Cardiac septum (tissue), 1 donor: ENCODE measurements at regions of chr9 and their contacts with region 1.

Region 1: DNA sequence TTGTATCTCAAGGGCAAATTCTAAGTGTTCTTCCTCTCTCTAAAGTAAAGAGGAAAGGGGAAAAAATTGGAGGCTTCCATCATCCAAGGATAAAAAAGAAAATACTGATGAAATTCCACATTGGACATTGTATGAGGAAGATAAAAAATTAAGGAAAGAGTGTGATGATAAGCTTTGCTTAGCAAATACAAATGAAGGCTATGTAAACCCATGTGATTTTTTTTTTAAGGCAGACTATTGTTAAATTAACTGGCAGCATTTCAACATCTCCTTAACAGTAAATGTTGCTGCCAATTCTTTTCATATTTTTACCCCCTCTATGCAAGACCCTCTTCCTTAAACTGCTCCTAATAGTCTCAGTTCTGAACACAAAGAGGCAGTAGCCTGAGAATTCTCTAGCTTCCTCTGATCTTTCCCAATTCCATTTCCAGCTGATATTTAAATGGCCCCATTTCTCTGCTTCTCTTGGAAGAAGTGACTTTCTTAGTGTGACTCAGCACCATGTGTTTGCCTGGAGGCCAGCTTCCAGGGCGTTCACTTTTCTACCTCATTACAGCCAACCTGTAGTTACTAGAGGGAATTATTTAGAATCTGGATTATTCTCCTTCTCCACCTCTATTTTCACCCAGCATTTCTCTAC is 159.7 kb downstream of the TLE1 start:
- DNase-seq: no peak

Region 2: DNA sequence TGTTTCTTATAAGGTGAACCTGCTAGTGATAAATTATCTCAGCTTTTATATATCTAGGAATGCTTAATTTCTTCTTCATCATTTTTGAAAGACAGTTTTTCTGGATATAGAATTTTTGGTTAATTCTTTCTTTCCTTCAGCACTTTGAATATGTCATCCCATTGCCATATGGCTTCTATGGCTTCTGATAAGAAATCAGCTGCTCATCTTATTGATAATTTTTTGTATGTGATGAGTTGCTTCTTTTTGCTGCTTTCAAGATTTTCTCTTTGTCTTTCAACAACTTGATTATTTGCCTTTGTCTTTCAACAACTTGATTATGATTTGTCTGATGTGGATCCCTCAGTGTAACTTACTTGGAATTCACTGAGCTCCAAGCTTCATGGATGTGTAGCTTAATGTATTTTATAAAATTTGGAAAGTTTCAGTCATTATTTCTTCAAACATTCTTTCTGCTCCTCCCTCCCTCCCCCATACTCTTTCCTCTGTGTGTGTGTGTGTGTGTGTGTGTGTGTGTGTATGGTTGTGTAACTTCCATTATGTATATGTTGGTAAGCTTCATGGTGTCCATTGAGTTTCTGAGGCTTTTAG is 84.2 kb before region 1 on chr9:
- intact Hi-C with region 1: no loop called
- DNase-seq: no peak

Region 3: DNA sequence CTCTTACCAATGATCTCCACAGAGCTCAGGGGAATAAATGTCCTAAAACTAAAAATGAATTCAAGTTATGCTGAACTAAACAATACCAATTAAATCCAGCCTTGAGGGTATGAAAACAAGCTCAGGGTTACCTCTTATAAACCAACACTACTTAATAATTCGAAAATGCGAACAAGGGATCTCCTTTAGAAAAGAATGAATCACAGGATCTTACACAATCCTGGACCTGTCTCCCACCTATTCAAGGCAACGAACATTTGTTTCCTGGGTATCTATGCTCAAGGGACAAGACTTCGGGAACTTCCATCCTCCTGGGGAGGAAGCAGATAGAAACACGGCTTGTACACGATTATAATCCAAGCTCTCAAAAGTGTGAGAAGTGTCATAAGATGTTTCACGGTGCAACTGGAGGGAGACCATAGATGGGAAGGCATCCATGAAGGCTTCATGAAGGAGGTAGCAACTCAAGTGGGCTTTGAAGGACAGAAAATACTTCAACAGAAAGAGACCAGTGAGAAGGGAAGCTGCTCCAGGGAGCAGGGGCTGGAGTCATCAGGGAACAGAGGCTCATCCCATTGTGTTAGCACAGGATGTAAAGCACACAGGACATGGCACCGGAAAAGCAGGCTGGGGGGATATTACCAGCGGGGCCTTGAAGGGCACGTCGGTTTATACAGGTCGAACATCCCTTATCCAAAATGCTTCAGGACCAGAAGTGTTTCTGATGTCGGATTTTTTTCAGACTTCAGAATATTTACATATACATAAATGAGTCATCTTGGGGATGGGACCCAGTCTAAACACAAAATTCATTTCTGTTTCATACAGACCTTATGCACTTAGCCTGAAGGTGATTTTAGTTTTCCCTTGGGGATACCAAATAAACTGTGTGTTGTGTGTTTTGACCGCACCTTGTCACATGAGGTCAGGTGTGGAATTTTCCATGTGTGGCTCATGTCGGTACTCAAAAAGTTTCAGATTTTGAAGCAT is 72.3 kb after region 1 on chr9:
- intact Hi-C with region 1: loop called (anchors 5 kb)
- DNase-seq: no peak

Region 4: GRCh38 chr9:82606492-82607382 is 1077.1 kb after region 1 on chr9:
- intact Hi-C with region 1: loop called (anchors 10 kb)
- DNase-seq: no peak